ENCODE measurements at regions of chr17 and their contacts with region 1.

Region 1: DNA sequence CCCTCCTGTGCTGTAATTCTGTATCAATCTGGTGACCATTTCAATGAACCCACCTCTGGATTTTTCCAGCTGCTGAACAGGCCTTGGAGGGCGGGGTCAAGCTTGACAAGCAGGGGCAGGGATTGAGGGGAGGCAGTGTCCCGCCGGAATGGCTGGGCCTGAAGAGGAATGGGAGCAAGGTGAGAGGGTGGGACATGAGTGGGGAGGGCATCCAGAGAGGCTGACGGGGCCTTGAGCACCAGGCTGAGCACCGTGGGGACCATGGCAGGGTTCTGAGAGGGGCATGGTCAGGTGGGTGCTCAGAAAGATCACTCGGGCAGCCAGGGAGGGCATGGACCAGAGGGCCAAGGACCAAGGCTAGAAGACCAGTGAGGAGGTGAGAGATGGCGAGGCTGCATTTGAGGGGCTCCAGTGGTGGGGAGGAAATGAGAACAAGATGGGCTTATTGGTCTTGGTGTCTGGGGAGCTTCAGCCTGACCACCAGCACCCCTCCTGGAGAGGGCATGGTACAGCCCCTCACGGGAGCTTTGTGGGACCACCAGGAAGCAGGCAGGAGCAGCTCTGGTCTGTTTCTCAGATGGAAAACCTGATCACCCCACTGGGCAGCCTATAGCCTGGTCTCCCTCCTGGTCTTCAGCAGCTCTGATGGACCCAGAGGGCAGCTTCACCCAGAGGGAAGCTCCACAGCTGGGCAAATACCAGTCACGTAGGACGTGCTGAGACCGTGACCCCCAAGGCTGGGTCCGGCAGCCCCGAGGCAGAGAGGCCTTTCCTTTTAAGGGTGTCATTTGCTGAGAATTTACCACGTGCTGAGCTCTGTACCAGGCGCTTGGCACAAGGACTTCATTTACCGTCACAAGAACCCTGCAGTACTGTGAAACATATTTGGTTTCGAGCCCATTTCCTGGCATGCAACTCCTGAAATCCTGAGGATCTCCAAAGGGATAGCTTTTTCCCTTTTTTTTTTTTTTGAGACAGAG is 11.4 kb upstream of the NCBP3 start:
- DNase-seq: no peak
- ATAC-seq: peak; percentile 60
- H3K4me3 ChIP-seq: no peak overlapping the region; a peak in 1 of 6 replicates
- H3K27ac ChIP-seq: no peak overlapping the region
- H3K4me1 ChIP-seq: peaks cover 12% of the 10 kb centered on the region
- H3K27me3 ChIP-seq: 0 out of 5 replicates have a peak, but pooled peaks cover 0 to 2% of the 10 kb centered on the region in 2 experiments
- CTCF ChIP-seq: no peak
- EP300 ChIP-seq: no peak
- POLR2A ChIP-seq: no peak
- RAD21 ChIP-seq: no peak

Region 2: GRCh38 chr17:3845621-3846441 is 11.6 kb before region 1 on chr17 and contains the start of gene NCBP3:
- CTCF ChIA-PET with region 1: no interaction called
- POLR2A ChIA-PET with region 1: interaction called, 10 read pairs
- in situ Hi-C with region 1: no loop called
- intact Hi-C with region 1: no loop called
- DNase-seq: peak; percentile 81
- ATAC-seq: peak; percentile 98
- H3K4me3 ChIP-seq: peak within 1 kb of the TSS; percentile 97 to 98 (median 98)
- H3K27ac ChIP-seq: peak within 1 kb of the TSS; percentile 80
- H3K4me1 ChIP-seq: peaks cover 49% of the 10 kb centered on the region
- H3K27me3 ChIP-seq: no peaks in the 10 kb centered on the region; a peak in 1 of 5 replicates
- CTCF ChIP-seq: peak; percentile 96
- EP300 ChIP-seq: peak in 1 of 2 experiments; percentile 26; a peak in 2 of 4 replicates
- POLR2A ChIP-seq: peak; percentile 85 to 86
- RAD21 ChIP-seq: peak; percentile 73
- total RNA-seq, gene NCBP3: 20.6 and 24.8 TPM in 2 replicates